ENCODE measurements at regions of chr19 and their contacts with region 1.

Region 1: GRCh38 chr19:38402967-38403861 is at the start of gene FAM98C:
- DNase-seq: peak; percentile 96 to 99 (median 98)
- ATAC-seq: peak; percentile 95
- H3K4me3 ChIP-seq: peak within 1 kb of the TSS; percentile 74
- H3K4me3 Mint-ChIP-seq: peak within 1 kb of the TSS; percentile 97
- H3K27ac ChIP-seq: peak within 1 kb of the TSS; percentile 75 to 81
- H3K27ac Mint-ChIP-seq: peak within 1 kb of the TSS; percentile 91
- H3K4me1 ChIP-seq: peaks cover 26% of the 10 kb centered on the region
- H3K4me1 Mint-ChIP-seq: peaks cover 16% of the 10 kb centered on the region
- H3K27me3 ChIP-seq: no peaks in the 10 kb centered on the region
- H3K27me3 Mint-ChIP-seq: no peaks in the 10 kb centered on the region
- CTCF ChIP-seq: peak; percentile 97
- total RNA-seq, gene FAM98C: 33.2 to 36.1 TPM

Region 2: GRCh38 chr19:38374429-38375176 is 28.6 kb before region 1 on chr19 and contains the start of gene PSMD8:
- CTCF ChIA-PET with region 1: interaction called, 36 read pairs
- POLR2A ChIA-PET with region 1: interaction called, 73 read pairs
- intact Hi-C with region 1: loop called (anchors 1 to 2 kb)
- DNase-seq: peak; percentile 95 to 100 (median 98)
- ATAC-seq: peak; percentile 96
- H3K4me3 ChIP-seq: peak within 1 kb of the TSS; percentile 93
- H3K4me3 Mint-ChIP-seq: peak within 1 kb of the TSS; percentile 99
- H3K27ac ChIP-seq: peak within 1 kb of the TSS; percentile 77 to 89
- H3K27ac Mint-ChIP-seq: peak within 1 kb of the TSS; percentile 89
- H3K4me1 ChIP-seq: peaks cover 34% of the 10 kb centered on the region
- H3K4me1 Mint-ChIP-seq: peaks cover 30% of the 10 kb centered on the region
- H3K27me3 ChIP-seq: no peaks in the 10 kb centered on the region
- H3K27me3 Mint-ChIP-seq: peaks cover 6% of the 10 kb centered on the region
- CTCF ChIP-seq: peak; percentile 19
- total RNA-seq, gene PSMD8: 61.2 to 64.4 TPM

Region 3: GRCh38 chr19:38425810-38426466 is 22.7 kb after region 1 on chr19 and contains the start of gene RASGRP4:
- CTCF ChIA-PET with region 1: interaction called, 7 read pairs
- POLR2A ChIA-PET with region 1: interaction called, 12 read pairs
- intact Hi-C with region 1: no loop called
- DNase-seq: peak in 7 of 14 experiments; percentile 6 to 74 (median 34)
- ATAC-seq: peak; percentile 59
- H3K4me3 ChIP-seq: peak within 1 kb of the TSS; percentile 40
- H3K4me3 Mint-ChIP-seq: peak within 1 kb of the TSS; percentile 27
- H3K27ac ChIP-seq: no peak within 1 kb of the TSS
- H3K27ac Mint-ChIP-seq: no peak within 1 kb of the TSS
- H3K4me1 ChIP-seq: peaks cover 29% of the 10 kb centered on the region
- H3K4me1 Mint-ChIP-seq: peaks cover 25% of the 10 kb centered on the region
- H3K27me3 ChIP-seq: no peaks in the 10 kb centered on the region
- H3K27me3 Mint-ChIP-seq: peaks cover 5% of the 10 kb centered on the region
- CTCF ChIP-seq: no peak
- total RNA-seq, gene RASGRP4: 0.30 to 0.45 TPM

Region 4: GRCh38 chr19:38618590-38619360 is 215.6 kb after region 1 on chr19 and contains the start of gene EIF3K:
- CTCF ChIA-PET with region 1: interaction called, 22 read pairs
- POLR2A ChIA-PET with region 1: interaction called, 36 read pairs
- intact Hi-C with region 1: loop called (anchors 5 kb)
- DNase-seq: peak; percentile 92 to 100 (median 96)
- ATAC-seq: peak; percentile 63
- H3K4me3 ChIP-seq: peak within 1 kb of the TSS; percentile 97
- H3K4me3 Mint-ChIP-seq: peak within 1 kb of the TSS; percentile 97
- H3K27ac ChIP-seq: peak within 1 kb of the TSS; percentile 84 to 94
- H3K27ac Mint-ChIP-seq: peak within 1 kb of the TSS; percentile 94
- H3K4me1 ChIP-seq: peaks cover 62% of the 10 kb centered on the region
- H3K4me1 Mint-ChIP-seq: peaks cover 59% of the 10 kb centered on the region
- H3K27me3 ChIP-seq: no peaks in the 10 kb centered on the region
- H3K27me3 Mint-ChIP-seq: no peaks in the 10 kb centered on the region
- CTCF ChIP-seq: no peak
- total RNA-seq, gene EIF3K: 309 to 322 TPM

Region 5: GRCh38 chr19:38657633-38658222 is 254.5 kb after region 1 on chr19:
- CTCF ChIA-PET with region 1: interaction called, 4 read pairs
- POLR2A ChIA-PET with region 1: interaction called, 10 read pairs
- intact Hi-C with region 1: no loop called
- DNase-seq: peak in 3 of 14 experiments; percentile 22 to 65 (median 64)
- ATAC-seq: peak; percentile 30
- H3K4me3 ChIP-seq: no peak overlapping the region
- H3K4me3 Mint-ChIP-seq: peak overlapping the region; percentile 42
- H3K27ac ChIP-seq: peak overlapping the region in 1 of 2 donors; percentile 33
- H3K27ac Mint-ChIP-seq: peak overlapping the region; percentile 39
- H3K4me1 ChIP-seq: peaks cover 69% of the 10 kb centered on the region
- H3K4me1 Mint-ChIP-seq: peaks cover 60% of the 10 kb centered on the region
- H3K27me3 ChIP-seq: peaks cover 0 to 12% of the 10 kb centered on the region in 2 experiments
- H3K27me3 Mint-ChIP-seq: peaks cover 69% of the 10 kb centered on the region
- CTCF ChIP-seq: no peak

Region 6: DNA sequence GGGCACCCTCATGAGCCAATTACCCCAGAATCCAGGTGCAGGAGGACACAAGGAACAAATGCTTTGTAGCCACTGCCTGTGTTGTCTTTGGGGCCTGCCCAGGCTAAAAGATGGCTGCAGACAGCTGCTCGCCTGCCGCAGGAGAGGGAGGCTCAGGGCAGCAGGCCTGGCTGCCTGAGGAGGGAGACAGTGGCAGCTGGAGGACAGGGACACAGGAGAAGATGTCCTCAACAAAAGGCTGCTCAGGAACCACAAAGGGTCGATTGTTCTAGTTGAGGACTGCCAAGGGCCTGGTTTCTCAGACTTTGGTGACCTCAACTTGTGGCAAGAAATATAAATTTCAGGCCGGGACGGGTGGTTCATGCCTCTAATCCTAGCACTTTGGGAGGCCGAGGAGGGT is 488.6 kb after region 1 on chr19:
- CTCF ChIA-PET with region 1: interaction called, 4 read pairs
- POLR2A ChIA-PET with region 1: interaction called, 7 read pairs
- intact Hi-C with region 1: loop called in 1 of 2 experiments (anchors 2 kb)
- DNase-seq: peak in 1 of 14 experiments; percentile 2
- ATAC-seq: no peak
- H3K4me3 ChIP-seq: no peak overlapping the region
- H3K4me3 Mint-ChIP-seq: no peak overlapping the region
- H3K27ac ChIP-seq: no peak overlapping the region
- H3K27ac Mint-ChIP-seq: no peak overlapping the region
- H3K4me1 ChIP-seq: peaks cover 16% of the 10 kb centered on the region
- H3K4me1 Mint-ChIP-seq: peaks cover 6% of the 10 kb centered on the region
- H3K27me3 ChIP-seq: no peaks in the 10 kb centered on the region
- H3K27me3 Mint-ChIP-seq: no peaks in the 10 kb centered on the region
- CTCF ChIP-seq: no peak

Measured in CD4-positive, alpha-beta T cell (primary cell).